Pancreas (tissue), 10 donors: ENCODE measurements at regions of chr9 and their contacts with region 1.

Region 1: GRCh38 chr9:34891386-34891785 is 66.7 kb upstream of the PHF24 start:
- DNase-seq: no peak
- ATAC-seq: no peak
- H3K4me3 ChIP-seq: no peak overlapping the region
- H3K27ac ChIP-seq: no peak overlapping the region
- H3K4me1 ChIP-seq: no peaks in the 10 kb centered on the region
- H3K27me3 ChIP-seq: peaks cover 0 to 4% (median 0%) of the 10 kb centered on the region in 4 donors
- CTCF ChIP-seq: no peak

Region 2: DNA sequence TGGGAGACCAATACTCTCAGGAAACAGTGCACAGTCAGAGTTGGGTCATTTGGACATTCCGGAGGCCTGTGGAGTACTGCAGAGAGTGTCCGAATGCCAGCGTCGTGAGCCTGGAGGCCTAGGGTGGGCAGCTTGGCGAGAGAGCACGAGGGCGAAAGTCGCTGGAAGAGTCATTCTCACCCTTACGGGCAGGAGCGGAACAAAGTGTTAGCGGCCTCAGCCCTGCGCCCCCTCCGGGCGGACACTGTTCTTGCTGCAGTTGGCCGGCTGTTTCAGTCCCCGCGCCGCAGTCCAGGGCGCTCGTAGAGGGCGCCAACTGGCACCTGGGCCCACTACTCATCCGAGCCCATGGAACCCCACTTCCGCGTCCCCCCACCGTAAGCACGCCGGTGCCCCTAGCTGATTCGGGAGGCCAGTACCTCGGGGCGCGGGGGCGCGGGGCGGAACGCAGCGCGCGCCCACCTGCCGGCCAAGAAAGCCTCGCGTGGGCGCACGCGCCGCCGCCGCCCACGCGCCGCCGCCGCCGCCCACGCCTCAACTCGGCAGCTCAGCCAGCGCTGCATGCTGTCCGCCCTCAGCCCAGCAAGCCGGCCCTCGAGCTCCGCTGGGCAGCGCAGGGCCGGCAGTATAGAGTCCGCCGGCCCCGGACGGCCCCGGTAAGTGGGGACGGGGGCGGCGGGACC is 81.7 kb before region 1 on chr9:
- intact Hi-C with region 1: no loop called
- DNase-seq: peak in 5 of 6 donors; percentile 13 to 75 (median 43)
- ATAC-seq: peak in 3 of 4 donors; percentile 78 to 97 (median 87)
- H3K4me3 ChIP-seq: peak overlapping the region in 2 of 4 donors; percentile 17 to 21
- H3K27ac ChIP-seq: no peak overlapping the region
- H3K4me1 ChIP-seq: no peaks in the 10 kb centered on the region
- H3K27me3 ChIP-seq: peaks cover 0 to 18% (median 1%) of the 10 kb centered on the region in 4 donors
- CTCF ChIP-seq: peak in 3 of 4 donors; percentile 11 to 38 (median 20)

Region 3: GRCh38 chr9:34984049-34984448 is 92.7 kb after region 1 on chr9:
- intact Hi-C with region 1: loop called in 1 of 3 experiments (anchors 5 kb)
- DNase-seq: no peak
- ATAC-seq: peak in 1 of 4 donors; percentile 19
- H3K4me3 ChIP-seq: no peak overlapping the region
- H3K27ac ChIP-seq: no peak overlapping the region
- H3K4me1 ChIP-seq: no peaks in the 10 kb centered on the region
- H3K27me3 ChIP-seq: no peaks in the 10 kb centered on the region
- CTCF ChIP-seq: no peak